Thyroid gland (tissue), 4 donors: ENCODE measurements at regions of chr11 and their contacts with region 1.

Region 1: DNA sequence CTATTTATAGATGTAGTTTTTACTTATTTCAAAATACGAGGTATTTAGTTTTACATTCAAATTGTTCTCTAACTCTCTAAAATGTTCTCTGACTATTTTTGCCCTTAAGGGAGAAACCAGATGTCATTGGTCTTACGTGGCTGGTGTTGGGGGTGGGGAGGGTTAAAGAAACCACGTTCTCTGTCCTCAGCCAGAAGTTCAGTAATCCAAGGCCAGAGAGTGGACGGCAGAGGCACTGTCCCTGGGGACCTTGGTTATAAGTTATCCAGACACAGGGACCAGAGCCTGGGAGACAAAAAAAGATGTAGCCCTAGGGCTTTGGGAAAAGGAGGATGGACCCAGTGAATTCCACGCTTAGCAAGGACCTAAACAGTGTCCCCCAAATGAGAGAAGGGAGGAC is 706 bp upstream of the OR51E1 start:
- DNase-seq: no peak
- H3K4me3 ChIP-seq: no peak overlapping the region
- H3K27ac ChIP-seq: no peak overlapping the region
- H3K4me1 ChIP-seq: peaks cover 0 to 10% of the 10 kb centered on the region in 2 donors
- H3K27me3 ChIP-seq: no peaks in the 10 kb centered on the region
- CTCF ChIP-seq: no peak
- POLR2A ChIP-seq: no peak

Region 2: GRCh38 chr11:4826425-4826824 is 183.3 kb after region 1 on chr11:
- intact Hi-C with region 1: loop called (anchors 10 kb)
- DNase-seq: peak; percentile 66 to 76
- H3K4me3 ChIP-seq: no peak overlapping the region
- H3K27ac ChIP-seq: no peak overlapping the region
- H3K4me1 ChIP-seq: peaks cover 4 to 9% of the 10 kb centered on the region in 2 donors
- H3K27me3 ChIP-seq: no peaks in the 10 kb centered on the region
- CTCF ChIP-seq: peak in 4 of 6 experiments; percentile 29 to 66 (median 47)
- POLR2A ChIP-seq: no peak